ENCODE measurements at regions of chr1 and their contacts with region 1.

Region 1: GRCh38 chr1:64877151-64877550 is 89.2 kb downstream of the JAK1 start:
- DNase-seq: peak; percentile 85
- H3K4me3 Mint-ChIP-seq: peak overlapping the region; percentile 62
- H3K27ac Mint-ChIP-seq: peak overlapping the region; percentile 45
- H3K4me1 Mint-ChIP-seq: peaks cover 56% of the 10 kb centered on the region
- H3K27me3 Mint-ChIP-seq: no peaks in the 10 kb centered on the region

Region 2: DNA sequence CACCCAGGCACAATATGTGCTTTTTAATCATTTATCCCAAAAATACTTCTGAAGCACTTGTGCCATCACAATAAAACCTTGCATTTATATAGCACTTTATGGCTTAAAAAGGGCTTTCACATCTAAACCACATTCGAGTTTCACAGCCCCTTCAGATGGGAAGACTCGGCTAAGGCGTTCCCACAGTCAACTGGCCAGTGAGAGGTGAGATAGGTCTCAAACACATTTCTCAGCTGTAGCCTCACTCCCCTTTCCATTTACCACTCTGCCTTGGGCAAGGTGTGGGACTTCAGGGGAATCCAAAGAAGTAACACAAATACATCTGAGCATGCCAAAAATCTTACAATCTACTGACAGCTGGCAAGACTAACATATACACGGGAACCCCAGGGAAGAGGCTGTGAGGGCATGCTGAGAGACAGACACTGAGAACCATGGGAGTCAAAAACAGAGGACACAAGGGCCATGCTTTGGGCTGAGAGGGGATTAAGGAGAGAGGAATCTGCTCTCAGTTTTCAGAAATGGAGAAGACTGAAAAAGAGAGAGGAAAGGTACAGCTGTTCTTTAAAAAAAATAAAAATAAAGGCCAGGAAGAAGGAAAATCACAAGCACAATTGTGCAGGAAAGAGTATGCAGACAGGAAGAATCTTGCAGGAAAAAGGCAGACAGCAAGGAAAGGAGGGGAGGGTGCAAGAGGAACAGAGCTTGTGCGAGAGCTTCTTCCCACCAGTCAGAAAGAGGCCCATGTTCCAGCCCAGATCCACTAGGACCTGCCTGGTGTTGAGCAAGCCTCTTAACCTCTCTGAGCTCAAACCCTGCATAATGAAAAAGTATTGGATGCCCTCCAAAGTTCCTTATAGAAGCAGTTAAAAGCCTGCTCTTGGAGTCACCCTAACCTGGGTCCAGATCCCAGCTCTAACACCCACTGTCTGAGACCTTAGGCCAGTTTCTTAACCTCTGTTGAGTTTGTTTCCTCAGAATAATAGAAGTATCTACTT is 15.7 kb after region 1 on chr1:
- intact Hi-C with region 1: loop called (anchors 1 kb)
- DNase-seq: no peak
- H3K4me3 Mint-ChIP-seq: no peak overlapping the region
- H3K27ac Mint-ChIP-seq: peak overlapping the region; percentile 21
- H3K4me1 Mint-ChIP-seq: peaks cover 76% of the 10 kb centered on the region
- H3K27me3 Mint-ChIP-seq: no peaks in the 10 kb centered on the region